ENCODE measurements at regions of chr15 and their contacts with region 1.

Region 1: GRCh38 chr15:89358755-89359439 is 24.3 kb upstream of the POLG start:
- DNase-seq: no peak
- H3K4me3 ChIP-seq: peak overlapping the region; percentile 64
- CTCF ChIP-seq: peak; percentile 96

Region 2: GRCh38 chr15:89383365-89384175 is 24.7 kb after region 1 on chr15:
- CTCF ChIA-PET with region 1: interaction called, 243 read pairs
- POLR2A ChIA-PET with region 1: no interaction called
- DNase-seq: no peak
- H3K4me3 ChIP-seq: no peak overlapping the region
- CTCF ChIP-seq: no peak

Region 3: DNA sequence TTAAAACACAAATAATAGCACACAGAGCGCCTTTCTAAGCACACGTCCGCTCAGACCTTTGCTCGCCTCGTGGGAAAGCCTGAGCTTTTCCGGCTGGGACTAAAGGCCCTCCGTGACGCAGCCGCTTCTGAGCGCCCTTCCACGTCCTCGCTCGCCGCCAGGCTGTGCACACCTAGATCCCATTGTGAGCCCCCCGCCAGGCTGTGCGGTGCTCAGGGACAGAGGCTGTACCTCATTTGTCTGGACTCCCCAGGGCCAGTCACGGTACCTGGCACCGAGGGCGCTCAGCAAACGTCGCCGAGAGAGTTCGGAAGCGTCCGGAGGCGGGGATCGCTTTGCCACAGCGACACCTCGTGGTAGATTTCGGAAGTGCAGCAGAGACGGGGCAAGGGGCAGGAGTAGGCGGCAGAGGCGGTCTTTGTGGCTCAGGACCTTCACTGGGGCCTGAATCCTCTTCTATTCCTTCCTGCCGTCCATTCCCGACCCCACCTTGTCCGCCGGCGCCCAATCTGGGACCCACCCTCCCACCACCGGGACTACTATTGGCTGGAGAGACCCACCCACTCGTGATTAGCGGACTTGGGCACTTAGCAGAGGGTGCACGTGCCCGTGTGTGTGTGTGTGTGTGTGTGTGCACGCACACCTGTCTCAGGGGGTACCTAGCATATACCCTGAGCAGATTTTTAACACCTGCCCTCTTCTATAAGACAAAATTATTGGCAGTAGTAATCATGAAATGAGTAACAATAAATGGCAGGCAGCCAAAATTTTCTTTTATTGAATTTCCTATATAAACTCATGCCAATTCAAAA is 71.8 kb after region 1 on chr15:
- CTCF ChIA-PET with region 1: interaction called, 446 read pairs
- POLR2A ChIA-PET with region 1: interaction called, 3 read pairs
- DNase-seq: no peak
- H3K4me3 ChIP-seq: peak overlapping the region; percentile 58
- CTCF ChIP-seq: peak; percentile 97

Region 4: DNA sequence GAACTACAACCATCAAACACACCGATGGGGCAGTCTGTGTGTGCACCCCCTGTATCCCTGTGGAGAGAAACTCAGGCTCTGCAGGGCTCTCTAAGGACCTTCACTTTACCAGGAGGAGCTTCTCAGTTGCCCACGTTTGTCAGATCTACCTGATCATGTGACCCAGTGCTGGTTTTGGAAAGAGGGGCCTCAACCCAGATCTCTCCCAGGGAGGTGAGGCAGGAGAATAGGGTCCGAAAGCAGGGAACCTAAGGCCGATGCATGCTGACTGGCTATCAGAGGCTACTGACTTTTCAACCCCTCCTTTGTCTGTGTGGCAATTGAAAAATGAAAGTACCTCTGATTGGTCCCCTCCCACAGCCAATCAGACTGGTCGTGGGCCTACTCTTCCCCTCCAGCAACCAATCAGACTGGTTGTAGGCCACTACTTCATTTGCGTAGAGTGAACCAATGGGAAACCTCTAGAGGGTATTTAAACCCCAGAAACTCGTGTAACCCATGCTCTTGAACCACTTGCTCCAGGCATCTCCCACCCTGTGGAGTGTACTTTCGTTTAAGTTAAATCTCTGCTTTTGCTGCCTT is 103.5 kb after region 1 on chr15:
- CTCF ChIA-PET with region 1: interaction called, 30 read pairs
- POLR2A ChIA-PET with region 1: no interaction called
- DNase-seq: no peak
- H3K4me3 ChIP-seq: no peak overlapping the region
- CTCF ChIP-seq: no peak

Region 5: GRCh38 chr15:89492111-89492641 is 133.3 kb after region 1 on chr15:
- CTCF ChIA-PET with region 1: interaction called, 20 read pairs
- POLR2A ChIA-PET with region 1: no interaction called
- DNase-seq: no peak
- H3K4me3 ChIP-seq: no peak overlapping the region
- CTCF ChIP-seq: peak; percentile 32

Region 6: DNA sequence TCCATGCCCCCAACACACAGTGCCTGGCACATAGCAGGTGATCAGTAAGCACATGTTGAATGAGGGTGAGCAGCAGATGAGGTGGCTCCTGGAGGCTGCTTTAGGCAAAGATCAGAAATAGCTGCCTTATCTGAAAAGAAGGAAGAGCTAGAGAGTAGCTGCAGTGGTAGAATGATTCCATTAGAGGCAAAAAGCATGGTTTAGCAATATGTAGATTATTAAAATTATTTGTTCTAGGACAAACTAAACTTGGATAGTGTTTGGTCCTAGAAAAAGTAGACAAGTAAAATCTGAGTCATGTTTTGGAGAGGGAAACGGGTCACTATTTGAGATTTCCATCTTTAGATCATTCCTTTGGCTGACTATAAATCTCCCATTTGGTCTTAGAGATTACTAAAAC is 264.3 kb after region 1 on chr15:
- CTCF ChIA-PET with region 1: no interaction called
- POLR2A ChIA-PET with region 1: no interaction called
- DNase-seq: no peak
- H3K4me3 ChIP-seq: no peak overlapping the region
- CTCF ChIP-seq: no peak